ENCODE measurements at regions of chr4 and their contacts with region 1.

Region 1: GRCh38 chr4:24210332-24210902 is 320.6 kb upstream of the PPARGC1A start:
- DNase-seq: no peak
- ATAC-seq: no peak
- H3K4me3 ChIP-seq: no peak overlapping the region
- H3K27ac ChIP-seq: no peak overlapping the region
- H3K4me1 ChIP-seq: no peaks in the 10 kb centered on the region
- H3K27me3 ChIP-seq: no peaks in the 10 kb centered on the region
- CTCF ChIP-seq: no peak
- EP300 ChIP-seq: no peak
- POLR2A ChIP-seq: no peak
- RAD21 ChIP-seq: no peak

Region 2: GRCh38 chr4:24282446-24282845 is 72.0 kb after region 1 on chr4:
- CTCF ChIA-PET with region 1: no interaction called
- POLR2A ChIA-PET with region 1: no interaction called
- in situ Hi-C with region 1: no loop called
- intact Hi-C with region 1: loop called (anchors 2 kb)
- DNase-seq: no peak
- ATAC-seq: 0 out of 3 replicates have a peak, but pooled peaks have one; percentile 30
- H3K4me3 ChIP-seq: no peak overlapping the region
- H3K27ac ChIP-seq: no peak overlapping the region
- H3K4me1 ChIP-seq: no peaks in the 10 kb centered on the region
- H3K27me3 ChIP-seq: no peaks in the 10 kb centered on the region
- CTCF ChIP-seq: no peak
- EP300 ChIP-seq: no peak
- POLR2A ChIP-seq: no peak
- RAD21 ChIP-seq: no peak

Measured in HepG2 (cell line).